GM12878 (cell line): ENCODE measurements at regions of chr20 and their contacts with region 1.

Region 1: DNA sequence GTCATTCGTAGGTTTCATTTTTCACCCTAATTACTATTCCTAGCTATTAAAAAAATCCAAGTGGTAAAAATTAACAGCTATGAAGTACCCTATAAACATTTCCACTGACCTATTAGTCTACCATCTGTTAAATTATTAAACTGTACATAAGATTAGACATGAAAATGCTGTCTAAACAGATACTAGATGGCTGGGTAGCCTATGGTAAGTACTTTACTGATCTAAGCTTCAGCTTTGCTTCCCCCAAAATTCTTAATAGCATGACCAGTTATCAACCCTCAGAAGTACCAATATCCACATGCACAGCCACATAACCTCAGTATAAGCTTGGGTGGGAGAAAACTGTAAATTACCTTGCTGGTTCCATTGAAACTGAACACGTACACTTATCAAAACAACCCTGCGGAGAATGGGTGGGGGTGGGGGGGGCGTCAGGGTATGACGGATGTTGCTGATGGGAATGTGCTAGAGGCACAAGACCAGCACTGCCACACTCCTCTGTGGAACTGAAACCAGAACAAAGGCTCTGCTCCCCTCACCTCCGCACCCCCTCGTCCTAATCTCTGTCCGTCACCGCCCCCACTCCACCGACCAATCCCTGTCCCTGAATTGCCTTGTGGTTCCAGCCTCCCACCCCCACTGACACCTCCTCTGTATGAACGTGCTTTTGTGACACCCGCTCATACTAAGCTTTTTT is 45.3 kb downstream of the B4GALT5 start:
- DNase-seq: peak; percentile 96
- ATAC-seq: peak; percentile 92
- H3K4me3 ChIP-seq: peak overlapping the region; percentile 59; the same call in 1 of the 2 replicates
- H3K27ac ChIP-seq: peak overlapping the region; percentile 86
- H3K4me1 ChIP-seq: peaks cover 52% of the 10 kb centered on the region
- H3K27me3 ChIP-seq: no peaks in the 10 kb centered on the region
- CTCF ChIP-seq: no peak
- EP300 ChIP-seq: peak; percentile 69 to 74; a peak in 2 of 4 replicates
- POLR2A ChIP-seq: peak; percentile 83
- RAD21 ChIP-seq: no peak

Region 2: DNA sequence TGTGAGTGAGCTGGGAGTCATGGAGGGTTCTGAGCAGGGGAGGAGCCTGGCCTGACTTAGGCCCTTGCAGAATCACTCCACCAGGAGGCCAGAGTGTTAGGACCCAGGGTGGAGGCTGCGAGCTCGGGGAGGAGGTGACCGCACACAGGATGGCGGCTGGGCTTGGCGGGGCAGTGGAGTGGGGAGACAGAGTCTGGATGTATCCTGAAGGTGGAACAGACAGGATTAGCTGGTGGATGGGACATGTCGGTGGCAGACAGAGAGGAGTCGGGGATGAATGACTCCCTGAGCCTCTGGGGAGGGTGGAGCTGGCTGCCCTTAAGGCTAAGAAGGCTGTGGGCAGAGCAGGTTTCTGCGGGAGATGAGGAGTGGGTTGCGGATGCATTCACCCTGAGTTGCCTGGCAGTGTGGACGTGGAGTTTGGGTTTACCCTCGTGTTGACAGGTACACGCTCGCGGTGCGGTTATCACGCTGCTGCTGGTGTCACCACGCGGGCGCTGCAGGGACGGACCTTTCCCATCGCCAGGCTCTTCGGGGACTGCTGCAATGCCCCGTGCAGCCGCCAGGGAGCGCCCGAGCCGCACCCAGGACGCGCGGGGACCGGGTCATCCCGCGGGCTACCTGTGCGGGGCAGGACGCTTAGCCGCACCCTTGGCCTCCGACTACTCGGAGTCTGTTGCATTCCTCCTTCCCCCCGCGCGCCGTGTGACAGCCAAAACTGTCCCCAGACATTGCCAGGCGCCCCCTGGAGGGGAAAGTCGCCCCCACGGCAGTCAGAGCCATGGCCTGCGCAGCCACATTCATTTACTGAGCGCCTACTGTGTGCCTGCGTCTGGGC is 57.4 kb before region 1 on chr20:
- CTCF ChIA-PET with region 1: interaction called, 20 read pairs
- POLR2A ChIA-PET with region 1: interaction called, 4 read pairs
- RAD21 ChIA-PET with region 1: interaction called, 4 read pairs
- SMC1A ChIA-PET with region 1: interaction called, 20 read pairs
- in situ Hi-C with region 1: no loop called
- intact Hi-C with region 1: no loop called
- DNase-seq: no peak
- ATAC-seq: peak; percentile 87
- H3K4me3 ChIP-seq: peak overlapping the region; percentile 46; the same call in 1 of the 2 replicates
- H3K27ac ChIP-seq: no peak overlapping the region
- H3K4me1 ChIP-seq: peaks cover 11% of the 10 kb centered on the region
- H3K27me3 ChIP-seq: no peaks in the 10 kb centered on the region
- CTCF ChIP-seq: peak; percentile 97 to 99 (median 99)
- EP300 ChIP-seq: no peak
- POLR2A ChIP-seq: no peak
- RAD21 ChIP-seq: peak; percentile 94

Region 3: DNA sequence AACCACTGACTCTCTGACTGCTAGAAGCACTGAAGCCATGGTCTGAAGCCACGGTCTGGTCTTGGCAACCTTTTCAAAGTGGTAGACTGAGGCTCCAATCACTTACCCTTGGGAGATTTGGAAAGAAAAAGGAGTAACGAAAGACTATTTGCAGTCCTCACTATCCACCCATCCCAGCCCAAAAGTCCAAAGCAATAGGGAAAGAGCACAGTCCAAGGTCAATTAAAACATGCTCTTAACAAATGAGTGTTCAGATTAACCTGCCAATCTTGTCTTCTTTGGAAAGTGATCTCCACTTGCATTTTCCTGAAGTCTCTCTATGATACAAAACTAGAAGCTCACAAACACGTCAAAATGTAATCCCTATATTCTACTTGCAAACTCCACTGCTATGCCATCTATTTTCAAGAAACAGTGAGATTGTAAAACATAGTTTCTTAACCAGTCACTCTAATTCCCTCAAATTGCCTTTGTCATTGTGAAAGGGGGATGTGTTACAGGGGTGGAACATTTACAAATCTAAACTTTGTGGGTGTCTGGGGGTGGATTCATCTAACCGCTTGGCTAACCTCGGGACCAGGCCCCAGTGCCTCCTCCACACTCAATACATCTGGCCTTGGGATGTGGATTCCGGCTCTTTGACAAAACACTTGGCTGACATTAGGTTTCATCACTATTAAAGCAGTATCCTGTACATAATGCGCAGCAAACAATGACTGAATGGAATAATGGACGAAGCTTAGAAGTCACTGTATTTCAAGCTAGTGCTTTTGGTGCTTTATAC is 11.0 kb before region 1 on chr20:
- CTCF ChIA-PET with region 1: interaction called, 5 read pairs
- POLR2A ChIA-PET with region 1: interaction called, 5 read pairs
- RAD21 ChIA-PET with region 1: interaction called, 15 read pairs
- SMC1A ChIA-PET with region 1: interaction called, 10 read pairs
- in situ Hi-C with region 1: no loop called
- intact Hi-C with region 1: no loop called
- DNase-seq: no peak
- ATAC-seq: no peak
- H3K4me3 ChIP-seq: no peak overlapping the region
- H3K27ac ChIP-seq: peak overlapping the region; percentile 6; the same call in 1 of the 2 replicates
- H3K4me1 ChIP-seq: peaks cover 37% of the 10 kb centered on the region
- H3K27me3 ChIP-seq: no peaks in the 10 kb centered on the region
- CTCF ChIP-seq: no peak
- EP300 ChIP-seq: no peak
- POLR2A ChIP-seq: no peak
- RAD21 ChIP-seq: no peak

Region 4: DNA sequence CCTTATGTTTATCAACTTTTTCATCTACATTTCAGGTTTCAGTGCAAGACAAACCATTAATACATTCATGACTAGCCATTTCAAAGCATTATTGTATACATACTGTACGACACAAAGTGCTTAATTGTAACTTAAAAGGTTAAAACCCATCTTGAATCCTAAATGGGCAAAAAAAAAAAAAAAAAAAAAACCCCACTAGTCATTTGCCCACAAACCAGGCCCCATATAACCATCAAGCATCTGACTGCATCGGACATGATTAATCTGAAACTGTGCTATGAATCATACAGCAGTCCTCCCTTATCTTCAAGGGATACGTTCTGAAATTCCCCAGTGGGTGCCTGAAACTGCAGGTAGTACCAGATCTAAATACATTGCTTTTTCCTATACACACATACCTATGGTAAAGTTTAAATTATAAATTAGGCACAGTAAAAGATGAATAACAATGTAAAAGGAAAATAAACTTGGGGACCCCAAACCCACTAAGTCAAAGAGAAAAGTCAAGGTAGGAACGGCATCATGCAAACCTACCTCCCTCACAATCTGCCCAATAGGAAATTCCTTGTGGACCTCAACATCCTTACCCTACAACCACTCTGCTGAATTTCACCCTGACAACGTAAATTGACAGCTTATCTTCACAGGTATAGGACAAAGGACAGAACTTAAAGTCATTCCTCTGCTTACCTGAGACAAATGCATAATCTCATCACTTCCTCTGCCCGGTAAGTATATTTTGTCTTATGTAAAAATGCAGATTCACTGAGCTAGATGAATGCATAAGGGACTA is 31.1 kb after region 1 on chr20:
- CTCF ChIA-PET with region 1: interaction called, 8 read pairs
- POLR2A ChIA-PET with region 1: interaction called, 7 read pairs
- RAD21 ChIA-PET with region 1: interaction called, 14 read pairs
- SMC1A ChIA-PET with region 1: interaction called, 89 read pairs
- in situ Hi-C with region 1: no loop called
- intact Hi-C with region 1: loop called (anchors 2 kb)
- DNase-seq: no peak
- ATAC-seq: peak; percentile 90
- H3K4me3 ChIP-seq: peak overlapping the region; percentile 40
- H3K27ac ChIP-seq: peak overlapping the region; percentile 73
- H3K4me1 ChIP-seq: peaks cover 59% of the 10 kb centered on the region
- H3K27me3 ChIP-seq: no peaks in the 10 kb centered on the region
- CTCF ChIP-seq: no peak
- EP300 ChIP-seq: peak; percentile 53 to 75; a peak in 1 of 4 replicates
- POLR2A ChIP-seq: no peak
- RAD21 ChIP-seq: no peak

Region 5: GRCh38 chr20:49775229-49775693 is 106.9 kb after region 1 on chr20:
- CTCF ChIA-PET with region 1: no interaction called
- POLR2A ChIA-PET with region 1: no interaction called
- RAD21 ChIA-PET with region 1: interaction called, 6 read pairs
- SMC1A ChIA-PET with region 1: interaction called, 16 read pairs
- in situ Hi-C with region 1: no loop called
- intact Hi-C with region 1: no loop called
- DNase-seq: no peak
- ATAC-seq: no peak
- H3K4me3 ChIP-seq: no peak overlapping the region
- H3K27ac ChIP-seq: no peak overlapping the region
- H3K4me1 ChIP-seq: peaks cover 11% of the 10 kb centered on the region; the same call in 1 of the 2 replicates
- H3K27me3 ChIP-seq: no peaks in the 10 kb centered on the region
- CTCF ChIP-seq: no peak
- EP300 ChIP-seq: no peak
- POLR2A ChIP-seq: no peak
- RAD21 ChIP-seq: no peak

Region 6: GRCh38 chr20:49812463-49813304 is 144.4 kb after region 1 on chr20 and contains the start of gene SLC9A8:
- CTCF ChIA-PET with region 1: interaction called, 10 read pairs
- POLR2A ChIA-PET with region 1: no interaction called
- RAD21 ChIA-PET with region 1: interaction called, 10 read pairs
- SMC1A ChIA-PET with region 1: interaction called, 9 read pairs
- in situ Hi-C with region 1: no loop called
- intact Hi-C with region 1: no loop called
- DNase-seq: peak; percentile 78
- ATAC-seq: peak; percentile 93
- H3K4me3 ChIP-seq: peak within 1 kb of the TSS; percentile 76
- H3K27ac ChIP-seq: peak within 1 kb of the TSS; percentile 78
- H3K4me1 ChIP-seq: peaks cover 6% of the 10 kb centered on the region
- H3K27me3 ChIP-seq: no peaks in the 10 kb centered on the region
- CTCF ChIP-seq: peak; percentile 10 to 44 (median 36); a peak in 3 of 6 replicates
- EP300 ChIP-seq: peak in 1 of 2 experiments; percentile 7; a peak in 1 of 4 replicates
- POLR2A ChIP-seq: peak; percentile 85
- RAD21 ChIP-seq: no peak
- polyA plus RNA-seq, gene SLC9A8: 0.40 to 0.53 TPM